Activated CD8-positive, alpha-beta T cell treated with anti-CD3 and anti-CD28 coated beads, Interleukin-2, amount 10 ng/mL, durations not matched to agents 7 days and 5 days (primary cell): ENCODE measurements at regions of chr6 and their contacts with region 1.

Region 1: DNA sequence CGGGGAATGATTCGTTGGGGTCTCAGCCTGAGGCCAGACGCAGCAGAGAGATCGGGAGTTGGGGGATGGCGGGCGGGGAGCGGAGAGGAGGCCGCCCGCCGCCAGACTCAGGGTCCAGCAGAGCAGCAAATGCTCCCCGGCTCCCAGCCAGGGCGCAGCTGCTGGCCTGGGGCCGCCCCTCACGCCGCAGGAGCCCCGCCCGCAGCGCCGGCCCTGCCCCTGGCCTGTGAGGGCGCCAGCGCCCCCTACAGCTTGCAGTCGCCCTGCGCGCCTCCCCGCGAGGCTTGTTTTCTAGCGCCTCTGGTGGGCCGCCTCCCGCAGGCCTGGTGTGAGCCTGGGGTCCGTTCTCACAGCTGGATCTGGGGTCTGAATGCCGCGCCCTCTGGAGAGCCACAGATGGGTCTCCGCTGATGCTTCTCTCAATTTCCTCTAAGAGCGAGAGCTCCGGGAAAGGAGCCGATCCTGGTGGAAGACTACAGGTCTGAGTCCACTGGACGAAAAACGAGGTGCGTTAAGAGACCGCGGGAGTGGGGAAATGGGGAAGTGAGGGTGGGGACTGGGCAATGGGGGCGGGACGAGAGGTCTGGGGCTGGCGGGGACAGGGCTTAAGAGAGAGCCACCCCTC is 29.9 kb downstream of the TRIM38 start:
- DNase-seq: peak; percentile 94
- ATAC-seq: peak; percentile 96
- H3K4me3 Mint-ChIP-seq: peak overlapping the region; percentile 96
- H3K27ac Mint-ChIP-seq: peak overlapping the region; percentile 96
- H3K4me1 Mint-ChIP-seq: peaks cover 29% of the 10 kb centered on the region
- H3K27me3 Mint-ChIP-seq: no peaks in the 10 kb centered on the region

Region 2: GRCh38 chr6:25962149-25963127 is 30.1 kb before region 1 on chr6 and contains the start of gene TRIM38:
- CTCF ChIA-PET with region 1: interaction called, 74 read pairs
- POLR2A ChIA-PET with region 1: interaction called, 6 read pairs
- DNase-seq: peak; percentile 91
- ATAC-seq: peak; percentile 90
- H3K4me3 Mint-ChIP-seq: peak within 1 kb of the TSS; percentile 99
- H3K27ac Mint-ChIP-seq: peak within 1 kb of the TSS; percentile 100
- H3K4me1 Mint-ChIP-seq: peaks cover 65% of the 10 kb centered on the region
- H3K27me3 Mint-ChIP-seq: no peaks in the 10 kb centered on the region
- total RNA-seq, gene TRIM38: 19.1 to 19.5 TPM

Region 3: DNA sequence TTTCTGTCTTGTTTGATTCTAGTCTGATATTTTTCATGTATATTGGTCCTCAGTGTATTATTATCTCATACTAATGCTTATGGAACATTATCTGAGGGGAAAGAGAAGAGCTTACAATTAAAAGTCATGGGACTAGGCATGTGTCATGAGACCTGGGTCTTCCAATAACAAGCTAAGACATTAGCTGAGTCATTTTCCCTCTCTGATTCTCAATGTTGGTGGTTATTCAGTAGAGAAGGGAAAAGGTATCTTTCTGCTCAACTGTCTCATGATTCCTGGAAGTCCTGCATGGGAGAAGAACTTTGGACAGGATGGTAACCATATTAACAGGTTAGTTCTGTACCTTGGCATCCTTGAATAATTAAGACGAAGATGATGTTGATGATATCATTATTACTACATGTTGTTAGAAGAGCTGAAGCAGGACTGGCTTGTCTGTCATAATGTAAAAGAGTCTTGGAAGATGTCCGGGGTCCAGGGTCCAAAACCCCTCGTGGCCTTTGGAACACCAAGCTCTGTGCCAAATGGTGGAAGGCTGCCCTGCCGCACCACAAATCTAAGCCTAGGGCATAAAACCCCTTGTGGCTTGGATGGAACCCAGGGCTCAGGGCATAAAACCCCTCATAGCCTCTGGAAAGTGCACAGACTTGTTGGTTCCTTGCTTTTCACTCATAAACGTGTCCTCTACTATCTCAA is 10.8 kb before region 1 on chr6:
- CTCF ChIA-PET with region 1: interaction called, 16 read pairs
- POLR2A ChIA-PET with region 1: interaction called, 6 read pairs
- DNase-seq: no peak
- ATAC-seq: no peak
- H3K4me3 Mint-ChIP-seq: no peak overlapping the region
- H3K27ac Mint-ChIP-seq: no peak overlapping the region
- H3K4me1 Mint-ChIP-seq: no peaks in the 10 kb centered on the region
- H3K27me3 Mint-ChIP-seq: no peaks in the 10 kb centered on the region

Region 4: DNA sequence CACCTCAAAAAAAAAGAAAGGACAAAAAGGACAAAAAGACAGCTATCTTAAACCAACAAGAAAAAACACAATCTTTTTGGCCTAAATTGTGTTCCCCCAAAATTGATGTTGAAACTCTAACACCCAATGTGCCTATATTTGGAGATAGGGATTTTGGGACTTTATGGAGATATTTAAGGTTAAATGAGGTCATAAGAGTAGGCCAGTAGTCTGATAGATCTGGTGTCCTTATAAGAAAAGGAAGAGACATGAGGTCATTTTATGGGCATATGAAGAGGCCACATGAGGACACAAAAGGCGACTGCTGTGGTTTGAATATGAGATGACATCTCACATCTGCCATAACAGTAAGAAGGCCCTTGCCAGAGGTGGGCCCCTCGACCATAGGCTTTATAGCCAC is 19.5 kb after region 1 on chr6:
- CTCF ChIA-PET with region 1: interaction called, 57 read pairs
- POLR2A ChIA-PET with region 1: interaction called, 39 read pairs
- DNase-seq: no peak
- ATAC-seq: no peak
- H3K4me3 Mint-ChIP-seq: no peak overlapping the region
- H3K27ac Mint-ChIP-seq: no peak overlapping the region
- H3K4me1 Mint-ChIP-seq: peaks cover 6% of the 10 kb centered on the region
- H3K27me3 Mint-ChIP-seq: no peaks in the 10 kb centered on the region

Region 5: DNA sequence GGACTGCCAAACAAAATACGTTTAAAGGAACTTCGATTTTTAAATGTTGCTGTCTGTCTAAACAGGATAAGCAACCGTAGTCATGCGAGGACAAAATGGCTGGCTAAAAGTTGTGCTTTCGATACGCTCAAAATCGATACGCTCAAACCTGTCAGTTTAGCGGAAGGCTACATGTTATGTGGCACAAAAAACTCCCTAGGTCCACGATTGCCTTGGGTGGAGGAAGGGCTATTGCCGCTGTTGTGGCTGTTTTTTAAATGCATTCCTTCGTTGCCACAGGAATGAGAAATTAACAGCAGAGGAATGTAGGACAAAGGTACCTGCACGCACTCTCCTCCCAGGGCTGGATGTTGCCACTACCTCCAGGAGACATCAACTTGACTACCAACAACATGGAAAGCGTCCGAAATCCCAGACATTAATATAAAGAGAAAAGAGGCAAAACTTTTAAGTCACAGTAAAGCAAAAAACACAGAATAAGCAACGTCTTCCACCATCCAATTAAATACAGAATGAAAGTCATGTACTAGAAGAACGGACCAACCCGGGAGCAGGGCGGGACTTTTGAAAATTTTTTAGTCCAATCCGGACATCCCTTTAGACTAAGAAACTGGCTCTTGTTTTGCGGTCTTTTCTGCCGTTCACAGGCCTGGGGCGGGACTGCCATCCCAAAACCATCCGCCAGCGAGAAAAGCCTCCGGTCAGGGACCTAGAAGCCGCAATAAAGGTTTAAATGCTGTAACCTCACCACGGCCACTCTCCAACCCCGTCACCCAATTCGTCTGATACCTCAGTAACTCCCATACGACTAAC is 62.5 kb after region 1 on chr6:
- CTCF ChIA-PET with region 1: no interaction called
- POLR2A ChIA-PET with region 1: no interaction called
- DNase-seq: peak; percentile 95
- ATAC-seq: peak; percentile 72
- H3K4me3 Mint-ChIP-seq: peak overlapping the region; percentile 87
- H3K27ac Mint-ChIP-seq: peak overlapping the region; percentile 100
- H3K4me1 Mint-ChIP-seq: peaks cover 36% of the 10 kb centered on the region
- H3K27me3 Mint-ChIP-seq: no peaks in the 10 kb centered on the region

Region 6: GRCh38 chr6:26129656-26130055 is 137.1 kb after region 1 on chr6:
- CTCF ChIA-PET with region 1: no interaction called
- POLR2A ChIA-PET with region 1: no interaction called
- DNase-seq: no peak
- ATAC-seq: no peak
- H3K4me3 Mint-ChIP-seq: peak overlapping the region; percentile 5
- H3K27ac Mint-ChIP-seq: peak overlapping the region; percentile 4
- H3K4me1 Mint-ChIP-seq: peaks cover 37% of the 10 kb centered on the region
- H3K27me3 Mint-ChIP-seq: no peaks in the 10 kb centered on the region

Region 7: GRCh38 chr6:26183581-26184366 is 191.2 kb after region 1 on chr6:
- CTCF ChIA-PET with region 1: no interaction called
- POLR2A ChIA-PET with region 1: no interaction called
- DNase-seq: peak; percentile 80
- ATAC-seq: peak; percentile 80
- H3K4me3 Mint-ChIP-seq: peak overlapping the region; percentile 83
- H3K27ac Mint-ChIP-seq: peak overlapping the region; percentile 97
- H3K4me1 Mint-ChIP-seq: peaks cover 79% of the 10 kb centered on the region
- H3K27me3 Mint-ChIP-seq: no peaks in the 10 kb centered on the region